ENCODE measurements at regions of chr1 and their contacts with region 1.

Region 1: DNA sequence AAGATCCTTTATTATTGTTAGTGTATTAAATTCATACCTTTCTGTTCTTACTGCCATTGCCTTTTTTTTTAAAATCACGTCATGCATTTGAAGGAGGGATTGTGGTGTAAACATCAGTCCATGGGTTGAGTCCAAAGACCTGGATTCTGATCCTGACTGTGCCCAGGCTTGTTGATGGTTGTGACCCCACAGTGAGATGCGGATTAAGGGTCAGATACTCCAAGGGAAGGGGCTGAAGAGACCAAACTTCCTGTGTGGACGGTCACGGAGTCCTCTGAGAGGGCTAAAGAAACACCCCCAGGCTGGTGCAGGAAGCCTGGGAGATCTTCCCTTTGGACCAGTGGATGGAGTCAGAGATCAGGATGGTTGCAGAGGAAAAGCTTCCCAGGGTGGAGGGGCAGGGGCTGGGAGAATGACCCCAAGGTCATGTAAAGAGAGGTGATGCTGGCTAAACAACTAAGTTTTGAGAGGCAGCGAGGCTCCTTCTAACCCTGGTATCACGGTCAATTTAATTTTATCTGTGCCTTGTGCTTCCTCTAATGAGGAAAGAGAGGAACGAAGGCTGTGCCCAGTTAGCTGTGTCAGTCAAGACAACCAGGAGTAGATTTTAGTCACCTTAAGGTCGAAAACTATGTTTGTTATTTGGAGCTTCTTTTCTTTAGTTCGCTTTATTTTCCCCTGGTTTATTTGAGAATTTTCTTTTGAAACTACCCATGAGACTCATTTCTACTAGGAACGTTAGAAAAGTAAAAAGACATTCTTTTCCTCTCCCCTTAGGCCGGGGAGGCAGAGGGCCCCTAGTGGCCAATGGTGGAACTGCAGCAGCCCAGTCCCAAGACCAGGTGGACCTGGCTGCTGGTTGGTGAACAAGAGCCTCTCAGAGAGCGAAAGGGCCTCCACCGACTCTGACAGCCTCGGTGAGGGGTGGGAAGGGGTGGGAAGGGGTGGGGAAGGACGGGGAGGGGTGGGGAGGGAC is 8.7 kb upstream of the GPR161 start:
- DNase-seq: peak; percentile 90
- ATAC-seq: peak; percentile 96
- H3K4me3 Mint-ChIP-seq: no peak overlapping the region
- H3K27ac Mint-ChIP-seq: peak overlapping the region; percentile 46
- H3K4me1 Mint-ChIP-seq: peaks cover 9% of the 10 kb centered on the region
- H3K27me3 Mint-ChIP-seq: peaks cover 10% of the 10 kb centered on the region

Region 2: DNA sequence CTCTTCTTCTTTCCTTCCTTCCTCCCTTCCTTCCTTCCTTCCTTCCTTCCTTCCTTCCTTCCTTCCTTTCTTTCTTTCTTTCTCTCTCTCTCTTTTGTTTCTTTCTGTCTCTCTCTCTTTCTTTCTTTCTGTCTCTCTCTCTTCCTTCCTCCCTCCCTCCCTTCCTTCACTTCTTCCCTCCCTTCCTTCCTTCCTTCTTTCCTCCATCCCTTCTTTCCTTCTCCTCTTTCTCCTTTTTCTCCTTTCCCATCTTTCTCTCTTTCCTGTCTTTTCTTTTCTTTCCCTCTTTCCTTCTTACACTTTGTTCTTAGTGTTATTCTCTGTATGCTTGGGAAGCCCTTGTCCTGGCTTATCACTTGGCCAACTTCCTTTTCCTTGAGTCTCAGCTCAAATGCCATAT is 136.2 kb before region 1 on chr1:
- CTCF ChIA-PET with region 1: no interaction called
- DNase-seq: no peak
- ATAC-seq: no peak
- H3K4me3 Mint-ChIP-seq: no peak overlapping the region
- H3K27ac Mint-ChIP-seq: peak overlapping the region; percentile 78
- H3K4me1 Mint-ChIP-seq: no peaks in the 10 kb centered on the region
- H3K27me3 Mint-ChIP-seq: no peaks in the 10 kb centered on the region

Region 3: GRCh38 chr1:168057921-168058320 is 87.6 kb before region 1 on chr1:
- CTCF ChIA-PET with region 1: no interaction called
- DNase-seq: no peak
- ATAC-seq: no peak
- H3K4me3 Mint-ChIP-seq: no peak overlapping the region
- H3K27ac Mint-ChIP-seq: no peak overlapping the region
- H3K4me1 Mint-ChIP-seq: peaks cover 3% of the 10 kb centered on the region
- H3K27me3 Mint-ChIP-seq: no peaks in the 10 kb centered on the region

Region 4: DNA sequence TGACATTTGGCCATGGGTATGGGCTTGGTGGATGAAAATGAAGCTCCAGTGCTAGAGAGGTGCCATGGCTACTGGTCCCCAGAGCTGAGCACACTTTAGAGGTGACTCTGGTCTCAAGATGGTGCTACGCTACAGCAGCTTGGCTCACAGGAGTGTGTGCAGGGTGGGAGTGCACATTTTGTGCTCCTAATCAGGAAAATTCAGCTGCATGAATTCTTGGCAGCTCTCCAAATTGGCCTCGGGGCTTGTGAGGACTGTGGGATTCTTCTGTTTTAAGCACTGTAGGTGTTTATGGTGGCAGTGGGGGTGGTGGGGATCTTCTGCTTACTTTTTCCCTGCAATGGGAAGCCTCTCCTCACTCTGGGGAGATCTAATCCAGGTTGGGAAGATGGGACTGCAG is 16.0 kb after region 1 on chr1:
- CTCF ChIA-PET with region 1: interaction called, 10 read pairs
- DNase-seq: no peak
- ATAC-seq: no peak
- H3K4me3 Mint-ChIP-seq: no peak overlapping the region
- H3K27ac Mint-ChIP-seq: no peak overlapping the region
- H3K4me1 Mint-ChIP-seq: no peaks in the 10 kb centered on the region
- H3K27me3 Mint-ChIP-seq: peaks cover 22% of the 10 kb centered on the region